Ovary (tissue), 10 donors: ENCODE measurements at regions of chrX and their contacts with region 1.

Region 1: DNA sequence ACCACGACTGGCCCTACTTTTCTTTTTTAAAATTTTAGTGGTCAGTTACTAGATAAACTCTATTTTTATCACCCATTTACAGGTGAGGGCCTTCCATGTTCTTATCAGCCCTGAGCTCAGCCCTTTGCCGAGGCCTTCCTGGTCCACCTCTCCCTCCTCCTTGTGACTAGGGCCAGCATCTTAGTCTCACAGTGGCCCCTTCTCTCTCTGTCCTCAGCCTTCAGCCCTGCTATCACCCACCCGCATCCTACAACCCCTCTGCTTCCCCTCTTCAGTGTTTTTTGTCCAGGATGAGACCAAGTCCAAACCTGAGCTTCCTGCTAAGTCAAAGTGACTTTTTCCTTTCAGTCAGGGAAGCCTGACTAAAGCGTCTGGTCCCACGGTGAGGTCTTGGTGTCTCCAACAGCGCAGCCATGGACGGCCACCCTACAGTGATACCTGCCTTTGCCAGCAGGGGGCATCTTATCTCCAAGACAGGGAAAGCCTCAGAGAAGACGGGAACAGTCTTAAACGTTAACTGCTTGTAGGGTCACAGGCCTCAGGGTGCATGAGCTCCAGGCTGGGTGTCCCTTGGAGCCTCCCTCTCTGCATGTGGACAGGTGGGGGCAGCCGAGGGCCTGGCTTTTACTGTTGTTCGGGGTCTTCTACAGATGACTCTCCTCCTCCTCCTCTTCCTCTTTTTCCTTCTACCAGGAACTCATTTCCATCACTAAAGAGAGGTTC is 11.7 kb upstream of the GAGE10 start:
- DNase-seq: peak; percentile 50 to 71 (median 60)
- H3K4me3 ChIP-seq: no peak overlapping the region
- H3K27ac ChIP-seq: no peak overlapping the region
- H3K4me1 ChIP-seq: no peaks in the 10 kb centered on the region
- H3K27me3 ChIP-seq: no peaks in the 10 kb centered on the region
- CTCF ChIP-seq: peak; percentile 31 to 42 (median 31)
- EP300 ChIP-seq: no peak
- POLR2A ChIP-seq: no peak

Region 2: GRCh38 chrX:49754233-49754857 is 462.6 kb after region 1 on chrX:
- intact Hi-C with region 1: loop called in 1 of 4 experiments (anchors 10 kb)
- DNase-seq: peak; percentile 18 to 49 (median 42)
- H3K4me3 ChIP-seq: no peak overlapping the region
- H3K27ac ChIP-seq: no peak overlapping the region
- H3K4me1 ChIP-seq: no peaks in the 10 kb centered on the region
- H3K27me3 ChIP-seq: no peaks in the 10 kb centered on the region
- CTCF ChIP-seq: peak; percentile 27 to 42 (median 38)
- EP300 ChIP-seq: no peak
- POLR2A ChIP-seq: no peak